Activated B cell treated with CpG ODN at 0.5 μM for 24 hours (primary cell): ENCODE measurements at regions of chr7 and their contacts with region 1.

Region 1: DNA sequence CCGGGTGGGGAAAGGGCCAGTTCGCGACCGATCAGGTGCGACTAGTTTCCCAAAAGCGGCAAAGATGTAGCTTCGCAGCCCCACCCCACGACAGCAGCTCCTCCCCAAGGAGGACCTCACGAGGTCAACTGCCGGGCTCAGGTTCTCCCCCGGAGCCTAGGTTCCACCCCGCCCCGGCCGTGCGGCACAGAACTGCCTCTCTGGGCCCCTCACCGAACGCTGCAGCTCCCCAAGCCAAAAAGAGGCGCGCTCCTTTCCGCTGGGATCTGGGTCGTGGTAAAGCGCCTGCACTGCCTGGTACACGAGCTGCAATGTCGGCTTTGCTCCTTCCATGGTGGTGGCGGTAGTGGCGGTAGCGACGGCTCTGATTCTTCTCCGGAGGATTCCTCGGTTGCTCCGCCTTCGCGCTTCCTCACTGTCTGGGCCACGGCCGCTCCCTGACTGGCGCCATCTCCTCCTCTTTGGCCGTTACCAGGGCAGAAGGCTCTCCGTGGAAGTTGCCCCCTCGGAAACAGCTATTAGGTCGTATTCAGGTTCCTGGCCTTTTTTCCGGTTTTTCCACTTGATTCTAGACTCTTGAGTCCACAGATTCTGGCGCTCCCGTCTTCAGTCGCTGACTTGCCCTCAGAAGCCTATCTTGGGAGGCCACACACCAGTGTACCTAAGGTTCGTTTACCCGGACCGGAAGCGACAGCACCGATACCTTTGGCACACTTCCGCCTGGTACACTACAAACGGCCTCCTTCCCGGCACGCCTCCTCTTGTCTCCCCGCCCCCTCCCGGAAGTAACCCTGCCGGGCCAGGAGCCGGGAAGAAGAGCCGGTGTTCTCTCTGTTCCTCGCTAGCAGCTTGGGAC is at the start of gene TNPO3:
- DNase-seq: peak; percentile 85
- ATAC-seq: peak; percentile 84
- H3K4me3 Mint-ChIP-seq: peak within 1 kb of the TSS; percentile 99
- H3K27ac Mint-ChIP-seq: peak within 1 kb of the TSS; percentile 99
- H3K4me1 Mint-ChIP-seq: peaks cover 47% of the 10 kb centered on the region
- H3K27me3 Mint-ChIP-seq: no peaks in the 10 kb centered on the region
- CTCF ChIP-seq: no peak
- total RNA-seq, gene TNPO3: 50.8 and 56.2 TPM in 2 replicates

Region 2: DNA sequence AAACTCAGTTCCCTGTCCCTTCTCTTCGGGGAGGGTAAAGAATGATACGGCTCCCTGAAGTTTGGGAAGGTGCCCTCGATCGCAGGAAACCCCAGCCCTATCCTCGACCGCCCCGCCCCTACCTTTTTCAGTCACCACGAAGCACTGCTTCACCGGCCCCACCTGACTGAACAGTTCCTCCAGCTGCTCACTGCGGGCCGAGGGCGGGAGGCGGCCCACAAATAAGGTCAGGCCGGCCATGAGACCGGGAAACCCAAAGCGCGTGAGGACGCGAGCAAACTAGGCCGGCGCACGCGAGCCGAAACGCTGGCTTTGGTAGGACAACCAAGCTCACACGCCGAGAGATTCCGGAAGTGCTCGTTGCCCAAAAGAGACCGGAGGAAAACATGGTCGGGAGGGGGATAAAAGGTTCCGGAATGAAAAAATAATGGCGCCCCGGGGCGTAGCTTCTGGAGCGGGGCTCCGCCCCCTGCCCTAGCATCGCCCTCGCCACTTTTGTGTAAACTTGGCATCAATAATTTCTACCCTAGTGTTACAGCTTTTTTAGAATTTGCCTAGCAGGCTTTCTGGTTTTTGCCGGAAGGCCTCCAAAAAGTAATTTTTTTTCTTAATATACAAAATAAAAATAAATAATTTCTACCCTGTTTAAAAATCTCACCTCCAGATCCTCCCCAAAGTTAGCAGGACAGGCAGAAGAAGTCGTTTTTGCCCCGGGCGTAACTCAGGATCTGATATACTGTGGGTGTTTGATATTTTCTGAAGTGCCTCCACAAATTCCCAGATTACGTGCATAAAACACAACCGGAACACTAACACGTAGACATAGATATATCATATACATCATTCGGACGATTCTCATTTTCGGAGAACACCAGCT is 710.9 kb before region 1 on chr7 and contains the start of gene RBM28:
- CTCF ChIA-PET with region 1: no interaction called
- POLR2A ChIA-PET with region 1: no interaction called
- intact Hi-C with region 1: loop called (anchors 2 kb)
- DNase-seq: peak; percentile 80
- ATAC-seq: peak; percentile 95
- H3K4me3 Mint-ChIP-seq: peak within 1 kb of the TSS; percentile 97
- H3K27ac Mint-ChIP-seq: peak within 1 kb of the TSS; percentile 95
- H3K4me1 Mint-ChIP-seq: peaks cover 26% of the 10 kb centered on the region
- H3K27me3 Mint-ChIP-seq: no peaks in the 10 kb centered on the region
- CTCF ChIP-seq: no peak
- total RNA-seq, gene RBM28: 45.7 and 54.4 TPM in 2 replicates

Region 3: DNA sequence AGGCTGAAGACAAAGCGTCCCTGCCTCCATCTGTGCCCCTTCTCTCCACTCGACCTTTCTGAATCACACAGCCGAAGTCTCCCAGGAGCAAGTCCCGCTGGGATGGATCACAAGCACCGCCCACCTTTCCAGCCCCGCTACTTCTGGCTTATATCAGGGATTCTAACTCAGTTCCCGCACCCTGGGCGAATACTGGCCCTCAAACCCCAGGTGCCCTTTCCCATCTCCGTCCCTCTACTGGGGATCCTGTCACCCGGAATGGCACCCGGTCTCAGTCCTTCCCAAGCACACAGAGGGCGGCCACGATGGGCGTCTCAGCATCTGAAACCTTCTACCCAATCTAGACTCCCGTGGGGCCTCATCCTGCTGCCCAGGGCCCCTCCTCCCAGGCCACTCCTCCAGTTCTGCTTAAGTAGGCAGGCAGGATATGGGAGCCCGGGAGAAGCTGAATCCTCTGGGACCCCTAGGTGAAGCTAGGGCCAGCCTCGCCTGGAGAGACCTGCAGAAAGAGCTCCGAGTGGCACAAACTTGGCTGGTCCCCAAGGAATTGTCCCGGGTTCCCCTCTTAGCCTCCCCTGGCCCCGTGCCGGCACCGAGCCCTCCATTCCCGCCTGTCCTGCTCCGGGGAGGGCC is 144.9 kb before region 1 on chr7:
- CTCF ChIA-PET with region 1: no interaction called
- POLR2A ChIA-PET with region 1: interaction called, 14 read pairs
- intact Hi-C with region 1: no loop called
- DNase-seq: no peak
- ATAC-seq: no peak
- H3K4me3 Mint-ChIP-seq: peak overlapping the region; percentile 19
- H3K27ac Mint-ChIP-seq: no peak overlapping the region
- H3K4me1 Mint-ChIP-seq: peaks cover 18% of the 10 kb centered on the region
- H3K27me3 Mint-ChIP-seq: peaks cover 19% of the 10 kb centered on the region
- CTCF ChIP-seq: no peak

Region 4: DNA sequence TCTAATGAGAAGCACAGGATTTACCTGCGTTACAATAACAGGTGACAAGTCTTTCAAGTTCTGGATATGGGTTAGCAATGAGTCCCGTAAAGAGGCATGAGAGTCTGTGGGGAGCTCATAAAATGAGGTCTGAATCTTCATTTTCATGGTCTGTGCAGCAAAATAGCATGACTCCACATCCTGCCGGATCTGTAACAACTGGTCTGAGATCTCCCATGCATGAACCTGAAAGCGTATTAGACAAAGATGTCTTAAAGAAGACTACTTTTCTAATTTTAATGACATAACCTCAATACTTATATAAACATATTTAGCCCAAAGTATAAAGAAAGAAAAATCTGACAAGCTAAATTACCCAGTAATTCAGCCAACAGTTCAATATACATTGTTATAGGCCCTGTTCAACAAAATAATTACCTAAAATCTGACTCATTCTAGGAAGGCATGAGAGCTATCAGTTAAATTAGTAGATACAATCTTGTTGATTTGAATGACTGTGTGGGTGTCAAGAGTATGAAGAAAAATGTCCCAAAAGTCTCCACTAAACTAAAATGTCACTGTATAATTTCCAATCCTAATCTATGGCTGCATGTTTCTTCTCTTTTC is 36.6 kb before region 1 on chr7:
- CTCF ChIA-PET with region 1: no interaction called
- POLR2A ChIA-PET with region 1: interaction called, 13 read pairs
- intact Hi-C with region 1: no loop called
- DNase-seq: no peak
- ATAC-seq: peak; percentile 87
- H3K4me3 Mint-ChIP-seq: peak overlapping the region; percentile 26
- H3K27ac Mint-ChIP-seq: peak overlapping the region; percentile 76
- H3K4me1 Mint-ChIP-seq: peaks cover 43% of the 10 kb centered on the region
- H3K27me3 Mint-ChIP-seq: no peaks in the 10 kb centered on the region
- CTCF ChIP-seq: no peak

Region 5: GRCh38 chr7:129122751-129123509 is 68.3 kb after region 1 on chr7:
- CTCF ChIA-PET with region 1: no interaction called
- POLR2A ChIA-PET with region 1: interaction called, 7 read pairs
- intact Hi-C with region 1: loop called (anchors 1 kb)
- DNase-seq: peak; percentile 53
- ATAC-seq: peak; percentile 89
- H3K4me3 Mint-ChIP-seq: peak overlapping the region; percentile 73
- H3K27ac Mint-ChIP-seq: peak overlapping the region; percentile 96
- H3K4me1 Mint-ChIP-seq: peaks cover 40% of the 10 kb centered on the region
- H3K27me3 Mint-ChIP-seq: no peaks in the 10 kb centered on the region
- CTCF ChIP-seq: no peak

Region 6: GRCh38 chr7:129188372-129188891 is 133.8 kb after region 1 on chr7 and contains the start of gene SMO:
- CTCF ChIA-PET with region 1: no interaction called
- POLR2A ChIA-PET with region 1: no interaction called
- intact Hi-C with region 1: no loop called
- DNase-seq: peak; percentile 40
- ATAC-seq: peak; percentile 60
- H3K4me3 Mint-ChIP-seq: peak within 1 kb of the TSS; percentile 85
- H3K27ac Mint-ChIP-seq: no peak within 1 kb of the TSS
- H3K4me1 Mint-ChIP-seq: peaks cover 22% of the 10 kb centered on the region
- H3K27me3 Mint-ChIP-seq: peaks cover 23% of the 10 kb centered on the region
- CTCF ChIP-seq: no peak
- total RNA-seq, gene SMO: 0.66 and 1.8 TPM in 2 replicates